ENCODE measurements at regions of chr19 and their contacts with region 1.

Region 1: GRCh38 chr19:1490311-1491113 is at the start of gene PCSK4:
- DNase-seq: peak; percentile 99
- ATAC-seq: peak; percentile 92
- H3K4me3 Mint-ChIP-seq: peak within 1 kb of the TSS; percentile 72
- H3K27ac Mint-ChIP-seq: peak within 1 kb of the TSS; percentile 66
- H3K4me1 Mint-ChIP-seq: peaks cover 9% of the 10 kb centered on the region
- H3K27me3 Mint-ChIP-seq: peaks cover 3% of the 10 kb centered on the region
- total RNA-seq, gene PCSK4: 1.8 to 3.9 TPM

Region 2: GRCh38 chr19:1275260-1275975 is 215.1 kb before region 1 on chr19 and contains the start of gene FAM174C:
- CTCF ChIA-PET with region 1: no interaction called
- POLR2A ChIA-PET with region 1: no interaction called
- intact Hi-C with region 1: loop called in 1 of 2 experiments (anchors 1 kb)
- DNase-seq: peak; percentile 99
- ATAC-seq: peak; percentile 82
- H3K4me3 Mint-ChIP-seq: peak within 1 kb of the TSS; percentile 83
- H3K27ac Mint-ChIP-seq: peak within 1 kb of the TSS; percentile 95
- H3K4me1 Mint-ChIP-seq: peaks cover 54% of the 10 kb centered on the region
- H3K27me3 Mint-ChIP-seq: no peaks in the 10 kb centered on the region
- total RNA-seq, gene FAM174C: 75.3 to 88.3 TPM

Region 3: DNA sequence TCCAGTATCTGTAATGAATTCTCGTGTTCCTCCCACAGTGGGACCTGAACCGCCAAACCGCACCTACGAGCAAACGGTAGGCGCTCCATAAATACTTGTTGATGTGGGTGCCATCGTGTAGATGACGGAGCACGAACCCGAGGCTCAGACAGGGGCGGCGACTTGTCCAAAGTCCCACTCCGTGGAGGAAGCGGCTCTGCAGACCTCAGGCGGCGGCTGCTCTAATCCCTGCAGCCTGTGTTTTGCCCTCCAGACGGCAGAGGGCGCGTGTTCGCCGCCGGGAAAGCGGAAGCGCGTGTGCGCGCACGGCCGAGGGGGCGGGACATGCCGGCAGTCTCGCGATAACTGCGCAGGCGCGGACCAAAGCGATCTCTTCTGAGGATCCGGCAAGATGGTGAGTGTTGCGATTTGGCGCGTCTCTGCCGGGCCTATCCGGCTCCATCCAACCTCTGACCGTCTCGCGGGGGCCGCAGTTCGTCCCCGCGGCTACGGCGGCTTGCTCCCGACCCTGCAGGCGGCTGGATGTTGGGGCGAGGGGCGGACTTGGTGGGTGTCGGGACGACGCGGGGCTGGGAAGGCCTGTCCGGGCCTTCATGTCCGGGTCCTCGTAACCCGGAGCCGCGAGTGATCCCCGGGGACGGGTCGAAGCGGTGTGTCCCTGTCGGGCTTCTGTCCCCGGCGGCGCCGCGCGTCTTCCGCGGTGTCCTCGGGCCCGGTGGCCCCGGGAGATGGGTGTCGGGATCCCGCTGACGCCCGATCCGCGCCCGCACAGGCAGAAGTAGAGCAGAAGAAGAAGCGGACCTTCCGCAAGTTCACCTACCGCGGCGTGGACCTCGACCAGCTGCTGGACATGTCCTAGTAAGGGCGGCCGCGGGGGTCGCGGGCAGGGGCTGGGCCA is 52.2 kb before region 1 on chr19 and contains the start of gene RPS15:
- CTCF ChIA-PET with region 1: no interaction called
- POLR2A ChIA-PET with region 1: no interaction called
- intact Hi-C with region 1: loop called in 1 of 2 experiments (anchors 1 kb)
- DNase-seq: peak; percentile 98
- ATAC-seq: peak; percentile 86
- H3K4me3 Mint-ChIP-seq: peak within 1 kb of the TSS; percentile 94
- H3K27ac Mint-ChIP-seq: peak within 1 kb of the TSS; percentile 99
- H3K4me1 Mint-ChIP-seq: peaks cover 34% of the 10 kb centered on the region
- H3K27me3 Mint-ChIP-seq: no peaks in the 10 kb centered on the region
- total RNA-seq, gene RPS15: 1,716 to 1,858 TPM

Region 4: DNA sequence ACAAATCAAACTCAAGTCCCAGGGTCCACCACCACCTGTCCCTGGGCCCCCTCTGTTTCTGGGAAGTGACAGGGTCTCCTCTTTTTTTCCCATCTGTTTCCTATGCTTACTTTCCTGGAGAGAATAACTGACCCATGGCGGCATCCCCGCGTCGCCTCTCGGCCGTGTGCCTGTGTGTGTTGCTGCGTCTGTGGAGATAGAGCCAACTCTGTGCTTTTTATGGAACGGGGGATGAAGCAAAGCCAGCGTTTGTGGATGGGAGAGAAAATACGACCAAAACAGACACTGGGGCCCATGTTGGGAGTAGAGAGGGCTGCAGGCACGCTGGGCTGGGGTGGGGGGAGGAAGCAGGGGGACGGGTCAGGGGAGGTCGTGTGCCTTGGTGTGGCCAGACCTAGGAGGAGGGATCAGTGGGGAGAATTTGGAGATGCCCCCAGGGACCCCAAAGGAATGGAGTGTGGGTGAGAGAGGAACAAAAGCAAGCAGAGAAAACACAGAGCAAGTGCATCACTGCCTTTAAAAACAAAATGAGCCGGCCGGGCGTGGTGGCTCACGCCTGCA is 49.9 kb after region 1 on chr19:
- CTCF ChIA-PET with region 1: no interaction called
- POLR2A ChIA-PET with region 1: no interaction called
- intact Hi-C with region 1: no loop called
- DNase-seq: no peak
- ATAC-seq: no peak
- H3K4me3 Mint-ChIP-seq: no peak overlapping the region
- H3K27ac Mint-ChIP-seq: no peak overlapping the region
- H3K4me1 Mint-ChIP-seq: no peaks in the 10 kb centered on the region
- H3K27me3 Mint-ChIP-seq: peaks cover 12% of the 10 kb centered on the region

Region 5: DNA sequence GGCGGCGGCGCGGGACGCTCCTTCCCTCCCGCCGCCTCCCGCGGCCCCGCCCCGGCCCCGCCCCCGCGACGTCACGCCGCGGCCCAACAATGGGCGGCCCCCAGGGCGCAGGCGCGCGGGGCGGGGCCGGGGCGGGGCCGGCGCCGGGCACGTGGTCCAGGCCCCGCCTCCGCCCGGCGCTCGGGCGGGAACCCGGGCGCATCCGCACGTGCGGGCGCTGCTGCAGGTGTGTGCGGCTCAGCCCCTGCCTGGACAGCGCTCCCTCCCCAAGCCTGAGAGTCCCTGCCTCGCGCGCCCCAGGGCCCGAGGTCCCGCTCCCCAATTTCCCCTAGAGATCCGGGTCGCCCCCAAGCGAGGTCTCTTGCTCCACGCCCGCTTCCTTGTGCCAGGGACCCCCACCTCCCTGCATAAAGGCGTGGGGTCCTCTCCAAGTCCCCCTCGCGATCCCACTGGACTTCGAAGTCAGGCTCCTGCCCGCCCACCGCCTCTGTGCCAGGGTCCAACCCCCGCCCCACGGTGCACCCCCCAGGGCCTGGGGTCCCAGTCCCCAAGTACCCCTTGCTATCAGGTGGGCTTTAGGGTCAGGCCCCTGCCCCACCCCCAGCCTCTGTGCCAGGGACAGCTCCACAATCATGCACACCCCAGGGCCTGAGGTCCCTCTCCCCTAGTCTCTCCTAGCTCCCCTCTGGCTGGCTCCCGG is 78.0 kb after region 1 on chr19 and contains the start of gene MEX3D:
- CTCF ChIA-PET with region 1: no interaction called
- POLR2A ChIA-PET with region 1: no interaction called
- intact Hi-C with region 1: loop called in 1 of 2 experiments (anchors 1 kb)
- DNase-seq: peak; percentile 90
- ATAC-seq: peak; percentile 88
- H3K4me3 Mint-ChIP-seq: no peak within 1 kb of the TSS
- H3K27ac Mint-ChIP-seq: no peak within 1 kb of the TSS
- H3K4me1 Mint-ChIP-seq: no peaks in the 10 kb centered on the region
- H3K27me3 Mint-ChIP-seq: peaks cover 7% of the 10 kb centered on the region
- total RNA-seq, gene MEX3D: 6.2 to 6.7 TPM

Region 6: DNA sequence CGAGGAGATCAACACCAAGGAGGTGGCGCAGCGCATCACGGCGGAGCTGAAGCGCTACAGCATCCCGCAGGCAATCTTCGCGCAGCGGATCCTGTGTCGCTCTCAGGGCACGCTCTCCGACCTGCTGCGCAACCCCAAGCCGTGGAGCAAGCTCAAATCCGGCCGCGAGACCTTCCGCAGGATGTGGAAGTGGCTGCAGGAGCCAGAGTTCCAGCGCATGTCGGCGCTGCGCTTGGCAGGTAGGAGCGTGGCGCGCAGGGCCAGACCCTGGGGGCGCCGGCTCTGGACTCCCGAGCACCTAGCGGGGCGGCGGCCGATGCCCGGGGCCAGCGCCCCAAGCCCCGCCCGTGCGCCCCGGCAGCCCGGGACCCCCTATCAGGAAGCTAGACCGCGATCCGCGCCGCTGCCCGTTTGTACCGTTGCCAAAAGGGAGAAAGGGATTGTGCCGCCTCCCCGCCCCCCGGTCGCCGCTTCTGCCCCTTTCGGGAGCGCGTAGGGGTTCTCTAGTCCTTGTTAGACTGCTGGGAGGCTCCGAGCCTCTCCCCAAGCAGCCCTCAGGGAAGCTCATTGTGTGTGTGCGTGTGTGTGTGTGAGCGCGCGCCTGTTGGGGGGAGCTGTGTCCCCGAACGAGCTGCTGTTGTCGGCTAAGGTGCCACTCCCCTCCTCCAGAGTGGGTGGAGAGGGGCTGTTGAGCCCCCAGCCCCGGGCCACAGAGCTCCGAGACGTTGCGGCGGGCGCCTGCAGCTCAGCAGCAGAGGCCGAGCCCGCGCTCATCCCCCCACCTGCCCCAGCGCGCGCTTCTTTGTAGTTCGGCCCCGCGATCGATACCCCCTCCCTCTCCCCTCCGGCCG is 264.3 kb after region 1 on chr19:
- CTCF ChIA-PET with region 1: no interaction called
- POLR2A ChIA-PET with region 1: no interaction called
- intact Hi-C with region 1: no loop called
- DNase-seq: peak; percentile 44
- ATAC-seq: no peak
- H3K4me3 Mint-ChIP-seq: no peak overlapping the region
- H3K27ac Mint-ChIP-seq: no peak overlapping the region
- H3K4me1 Mint-ChIP-seq: peaks cover 8% of the 10 kb centered on the region
- H3K27me3 Mint-ChIP-seq: peaks cover 54% of the 10 kb centered on the region

Region 7: GRCh38 chr19:1812469-1813196 is 322.1 kb after region 1 on chr19:
- CTCF ChIA-PET with region 1: no interaction called
- POLR2A ChIA-PET with region 1: no interaction called
- intact Hi-C with region 1: loop called in 1 of 2 experiments (anchors 1 kb)
- DNase-seq: peak; percentile 94
- ATAC-seq: peak; percentile 90
- H3K4me3 Mint-ChIP-seq: peak overlapping the region; percentile 77
- H3K27ac Mint-ChIP-seq: peak overlapping the region; percentile 90
- H3K4me1 Mint-ChIP-seq: peaks cover 14% of the 10 kb centered on the region
- H3K27me3 Mint-ChIP-seq: no peaks in the 10 kb centered on the region

Measured in activated CD4-positive, alpha-beta T cell treated with anti-CD3 and anti-CD28 coated beads for 36 hours (primary cell).